ENCODE measurements at regions of chr18 and their contacts with region 1.

Region 1: GRCh38 chr18:35580701-35581539 is 620 bp upstream of the GALNT1 start:
- DNase-seq: peak; percentile 88
- ATAC-seq: peak; percentile 65
- H3K4me3 ChIP-seq: peak overlapping the region; percentile 30 to 78 (median 65)
- H3K4me3 Mint-ChIP-seq: peak overlapping the region; percentile 84
- H3K27ac ChIP-seq: peak overlapping the region; percentile 69 to 86
- H3K27ac Mint-ChIP-seq: peak overlapping the region; percentile 88
- H3K4me1 ChIP-seq: peaks cover 15 to 16% of the 10 kb centered on the region in 2 donors
- H3K4me1 Mint-ChIP-seq: peaks cover 33% of the 10 kb centered on the region
- H3K27me3 ChIP-seq: no peaks in the 10 kb centered on the region
- H3K27me3 Mint-ChIP-seq: no peaks in the 10 kb centered on the region
- CTCF ChIP-seq: no peak

Region 2: GRCh38 chr18:35240664-35241447 is 340.1 kb before region 1 on chr18 and contains the start of gene ZNF397:
- CTCF ChIA-PET with region 1: no interaction called
- POLR2A ChIA-PET with region 1: no interaction called
- intact Hi-C with region 1: loop called (anchors 2 kb)
- DNase-seq: peak; percentile 97
- ATAC-seq: peak; percentile 98
- H3K4me3 ChIP-seq: peak within 1 kb of the TSS; percentile 79 to 95 (median 91)
- H3K4me3 Mint-ChIP-seq: peak within 1 kb of the TSS; percentile 91
- H3K27ac ChIP-seq: peak within 1 kb of the TSS; percentile 97
- H3K27ac Mint-ChIP-seq: peak within 1 kb of the TSS; percentile 99
- H3K4me1 ChIP-seq: peaks cover 10 to 12% of the 10 kb centered on the region in 2 donors
- H3K4me1 Mint-ChIP-seq: peaks cover 29% of the 10 kb centered on the region
- H3K27me3 ChIP-seq: no peaks in the 10 kb centered on the region
- H3K27me3 Mint-ChIP-seq: no peaks in the 10 kb centered on the region
- CTCF ChIP-seq: no peak
- total RNA-seq, gene ZNF397: 63.0 and 67.2 TPM in 2 replicates

Region 3: GRCh38 chr18:35616664-35617423 is 35.9 kb after region 1 on chr18:
- CTCF ChIA-PET with region 1: interaction called, 3 read pairs
- POLR2A ChIA-PET with region 1: interaction called, 5 read pairs
- intact Hi-C with region 1: loop called (anchors 1 kb)
- DNase-seq: peak; percentile 85
- ATAC-seq: peak; percentile 95
- H3K4me3 ChIP-seq: peak overlapping the region in 3 of 5 experiments; percentile 0 to 5 (median 1)
- H3K4me3 Mint-ChIP-seq: no peak overlapping the region
- H3K27ac ChIP-seq: peak overlapping the region; percentile 54 to 89
- H3K27ac Mint-ChIP-seq: no peak overlapping the region
- H3K4me1 ChIP-seq: peaks cover 20 to 26% of the 10 kb centered on the region in 2 donors
- H3K4me1 Mint-ChIP-seq: peaks cover 23% of the 10 kb centered on the region
- H3K27me3 ChIP-seq: no peaks in the 10 kb centered on the region
- H3K27me3 Mint-ChIP-seq: no peaks in the 10 kb centered on the region
- CTCF ChIP-seq: no peak

Region 4: GRCh38 chr18:35695803-35696202 is 114.9 kb after region 1 on chr18:
- CTCF ChIA-PET with region 1: no interaction called
- POLR2A ChIA-PET with region 1: no interaction called
- intact Hi-C with region 1: loop called (anchors 10 kb)
- DNase-seq: no peak
- ATAC-seq: no peak
- H3K4me3 ChIP-seq: no peak overlapping the region
- H3K4me3 Mint-ChIP-seq: no peak overlapping the region
- H3K27ac ChIP-seq: no peak overlapping the region
- H3K27ac Mint-ChIP-seq: no peak overlapping the region
- H3K4me1 ChIP-seq: no peaks in the 10 kb centered on the region
- H3K4me1 Mint-ChIP-seq: no peaks in the 10 kb centered on the region
- H3K27me3 ChIP-seq: no peaks in the 10 kb centered on the region
- H3K27me3 Mint-ChIP-seq: no peaks in the 10 kb centered on the region
- CTCF ChIP-seq: no peak

Region 5: GRCh38 chr18:35861367-35862118 is 280.6 kb after region 1 on chr18:
- CTCF ChIA-PET with region 1: no interaction called
- POLR2A ChIA-PET with region 1: no interaction called
- intact Hi-C with region 1: no loop called
- DNase-seq: no peak
- ATAC-seq: no peak
- H3K4me3 ChIP-seq: no peak overlapping the region
- H3K4me3 Mint-ChIP-seq: no peak overlapping the region
- H3K27ac ChIP-seq: no peak overlapping the region
- H3K27ac Mint-ChIP-seq: no peak overlapping the region
- H3K4me1 ChIP-seq: no peaks in the 10 kb centered on the region
- H3K4me1 Mint-ChIP-seq: no peaks in the 10 kb centered on the region
- H3K27me3 ChIP-seq: no peaks in the 10 kb centered on the region
- H3K27me3 Mint-ChIP-seq: peaks cover 3% of the 10 kb centered on the region
- CTCF ChIP-seq: no peak

Region 6: GRCh38 chr18:36129300-36130038 is 548.5 kb after region 1 on chr18 and contains the starts of genes ELP2 and SLC39A6:
- CTCF ChIA-PET with region 1: no interaction called
- POLR2A ChIA-PET with region 1: no interaction called
- intact Hi-C with region 1: loop called (anchors 2 kb)
- DNase-seq: peak; percentile 97
- ATAC-seq: peak; percentile 85
- H3K4me3 ChIP-seq: peak within 1 kb of the TSS; percentile 82 to 98 (median 90)
- H3K4me3 Mint-ChIP-seq: peak within 1 kb of the TSS; percentile 94
- H3K27ac ChIP-seq: peak within 1 kb of the TSS; percentile 97 to 99
- H3K27ac Mint-ChIP-seq: peak within 1 kb of the TSS; percentile 98
- H3K4me1 ChIP-seq: peaks cover 34 to 36% of the 10 kb centered on the region in 2 donors
- H3K4me1 Mint-ChIP-seq: peaks cover 53% of the 10 kb centered on the region
- H3K27me3 ChIP-seq: no peaks in the 10 kb centered on the region
- H3K27me3 Mint-ChIP-seq: no peaks in the 10 kb centered on the region
- CTCF ChIP-seq: no peak
- total RNA-seq, gene ELP2: 137 and 169 TPM in 2 replicates
- total RNA-seq, gene SLC39A6: 18.2 and 19.5 TPM in 2 replicates